ENCODE measurements at regions of chr11 and their contacts with region 1.

Region 1: DNA sequence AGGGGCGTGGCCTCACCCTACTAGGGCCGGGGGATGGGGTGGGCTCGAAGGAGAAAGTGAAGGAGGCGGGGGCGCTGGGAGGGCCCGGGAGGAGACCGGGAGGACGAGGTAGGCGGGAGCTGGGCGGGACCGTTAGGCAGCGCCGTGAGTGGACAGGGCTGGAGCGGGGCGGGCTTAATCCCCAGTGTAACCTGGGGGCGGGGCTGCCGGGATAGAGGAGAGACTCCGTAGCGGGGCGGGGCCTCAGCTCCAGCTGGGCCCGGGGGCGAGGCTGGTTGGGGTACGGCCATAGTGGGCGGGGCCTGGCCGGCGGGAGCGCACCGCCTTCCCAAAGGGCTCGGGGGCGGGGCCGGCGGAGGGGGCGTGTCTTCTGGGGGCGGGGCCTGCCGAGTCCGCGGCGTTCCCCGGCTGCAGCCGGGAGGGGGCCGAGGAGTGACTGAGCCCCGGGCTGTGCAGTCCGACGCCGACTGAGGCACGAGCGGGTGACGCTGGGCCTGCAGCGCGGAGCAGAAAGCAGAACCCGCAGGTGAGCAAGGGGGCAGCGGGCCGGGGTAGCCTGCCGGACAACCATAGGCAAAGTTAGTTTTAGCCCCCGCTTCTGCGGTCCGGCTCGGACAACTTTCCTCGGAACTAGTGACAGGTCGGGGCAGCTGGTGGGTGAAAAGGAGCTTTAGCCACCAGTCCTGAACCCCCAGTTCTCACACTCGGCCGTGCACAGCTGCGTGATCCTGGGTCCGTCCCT is at the start of gene CD82:
- DNase-seq: peak; percentile 91 to 97 (median 96)
- H3K4me3 ChIP-seq: peak within 1 kb of the TSS; percentile 98
- H3K4me3 Mint-ChIP-seq: peak within 1 kb of the TSS; percentile 86 to 94 (median 90)
- H3K27ac ChIP-seq: peak within 1 kb of the TSS; percentile 54
- H3K27ac Mint-ChIP-seq: peak within 1 kb of the TSS; percentile 77 to 96 (median 91)
- H3K4me1 ChIP-seq: peaks cover 54% of the 10 kb centered on the region
- H3K4me1 Mint-ChIP-seq: peaks cover 49 to 62% (median 53%) of the 10 kb centered on the region in 3 donors
- H3K27me3 ChIP-seq: no peaks in the 10 kb centered on the region
- H3K27me3 Mint-ChIP-seq: no peaks in the 10 kb centered on the region
- total RNA-seq, gene CD82: 356 to 388 TPM

Region 2: GRCh38 chr11:44611687-44612434 is 46.5 kb after region 1 on chr11:
- CTCF ChIA-PET with region 1: interaction called, 532 read pairs
- POLR2A ChIA-PET with region 1: interaction called, 13 read pairs
- DNase-seq: peak; percentile 58 to 92 (median 63)
- H3K4me3 ChIP-seq: no peak overlapping the region
- H3K4me3 Mint-ChIP-seq: peak overlapping the region; percentile 9 to 64 (median 38)
- H3K27ac ChIP-seq: peak overlapping the region; percentile 38
- H3K27ac Mint-ChIP-seq: peak overlapping the region; percentile 83 to 99 (median 94)
- H3K4me1 ChIP-seq: peaks cover 76% of the 10 kb centered on the region
- H3K4me1 Mint-ChIP-seq: peaks cover 65 to 94% (median 83%) of the 10 kb centered on the region in 3 donors
- H3K27me3 ChIP-seq: no peaks in the 10 kb centered on the region
- H3K27me3 Mint-ChIP-seq: peaks cover 0 to 2% of the 10 kb centered on the region in 2 donors

Measured in CD8-positive, alpha-beta memory T cell (primary cell).